ENCODE measurements at regions of chr3 and their contacts with region 1.

Region 1: DNA sequence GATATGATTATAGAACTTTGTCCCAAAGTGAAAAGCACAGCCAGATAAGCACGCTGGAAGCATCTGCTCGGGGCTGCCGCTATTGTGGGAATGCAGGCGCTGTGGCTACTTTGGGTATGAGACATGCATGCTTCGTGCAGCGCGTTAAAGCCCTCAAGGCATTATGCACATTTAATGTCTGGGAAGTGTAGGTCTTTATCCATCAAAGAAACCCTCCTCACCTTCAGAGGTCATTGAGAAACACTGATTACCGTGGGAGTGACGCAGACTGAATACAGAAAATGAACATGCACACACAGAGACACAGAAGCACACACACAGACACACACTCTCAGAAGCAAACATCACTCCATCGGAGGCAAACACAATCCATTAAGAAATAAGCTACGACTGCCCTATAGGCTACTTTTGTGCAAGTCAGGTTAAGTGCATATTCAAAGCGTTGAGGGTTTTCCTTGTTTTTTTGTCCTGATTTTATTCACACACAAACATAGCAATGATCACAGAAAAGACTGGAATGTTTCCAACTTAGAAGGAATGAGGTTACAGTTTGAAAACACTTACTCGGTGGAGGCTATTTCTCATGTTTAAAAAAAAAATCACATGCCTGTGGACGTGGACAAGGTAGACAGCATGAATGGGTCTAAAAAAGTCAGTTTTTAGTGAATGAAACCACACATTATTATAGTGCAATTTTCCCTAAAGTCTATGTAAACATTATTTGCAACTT is 68.5 kb downstream of the PLCH1 start:
- DNase-seq: no peak
- ATAC-seq: no peak
- H3K4me3 ChIP-seq: peak overlapping the region; percentile 12 to 47 (median 22)
- H3K27ac ChIP-seq: no peak overlapping the region
- H3K4me1 ChIP-seq: no peaks in the 10 kb centered on the region
- H3K27me3 ChIP-seq: no peaks in the 10 kb centered on the region
- CTCF ChIP-seq: no peak
- POLR2A ChIP-seq: no peak

Region 2: GRCh38 chr3:154334973-154335420 is 1341.4 kb before region 1 on chr3:
- in situ Hi-C with region 1: loop called in 1 of 4 experiments (anchors 25 kb)
- intact Hi-C with region 1: no loop called
- DNase-seq: no peak
- ATAC-seq: peak in 1 of 2 donors; percentile 54
- H3K4me3 ChIP-seq: no peak overlapping the region
- H3K27ac ChIP-seq: no peak overlapping the region
- H3K4me1 ChIP-seq: no peaks in the 10 kb centered on the region
- H3K27me3 ChIP-seq: peaks cover 0 to 3% (median 0%) of the 10 kb centered on the region in 3 donors
- CTCF ChIP-seq: peak; percentile 34 to 68 (median 42)
- POLR2A ChIP-seq: no peak

Region 3: GRCh38 chr3:154758109-154758868 is 918.1 kb before region 1 on chr3:
- in situ Hi-C with region 1: loop called in 1 of 4 experiments (anchors 25 kb)
- intact Hi-C with region 1: no loop called
- DNase-seq: no peak
- ATAC-seq: peak; percentile 62 to 68
- H3K4me3 ChIP-seq: no peak overlapping the region
- H3K27ac ChIP-seq: no peak overlapping the region
- H3K4me1 ChIP-seq: no peaks in the 10 kb centered on the region
- H3K27me3 ChIP-seq: no peaks in the 10 kb centered on the region
- CTCF ChIP-seq: peak; percentile 25 to 61 (median 53)
- POLR2A ChIP-seq: no peak

Region 4: GRCh38 chr3:155352900-155353490 is 323.4 kb before region 1 on chr3:
- in situ Hi-C with region 1: loop called in 2 of 4 experiments (anchors 25 kb)
- intact Hi-C with region 1: no loop called
- DNase-seq: no peak
- ATAC-seq: no peak
- H3K4me3 ChIP-seq: no peak overlapping the region
- H3K27ac ChIP-seq: no peak overlapping the region
- H3K4me1 ChIP-seq: no peaks in the 10 kb centered on the region
- H3K27me3 ChIP-seq: no peaks in the 10 kb centered on the region
- CTCF ChIP-seq: peak in 4 of 5 experiments; percentile 19 to 39 (median 29)
- POLR2A ChIP-seq: no peak

Measured in gastrocnemius medialis (tissue), 4 donors.